Naive thymus-derived CD4-positive, alpha-beta T cell (primary cell): ENCODE measurements at regions of chr4 and their contacts with region 1.

Region 1: DNA sequence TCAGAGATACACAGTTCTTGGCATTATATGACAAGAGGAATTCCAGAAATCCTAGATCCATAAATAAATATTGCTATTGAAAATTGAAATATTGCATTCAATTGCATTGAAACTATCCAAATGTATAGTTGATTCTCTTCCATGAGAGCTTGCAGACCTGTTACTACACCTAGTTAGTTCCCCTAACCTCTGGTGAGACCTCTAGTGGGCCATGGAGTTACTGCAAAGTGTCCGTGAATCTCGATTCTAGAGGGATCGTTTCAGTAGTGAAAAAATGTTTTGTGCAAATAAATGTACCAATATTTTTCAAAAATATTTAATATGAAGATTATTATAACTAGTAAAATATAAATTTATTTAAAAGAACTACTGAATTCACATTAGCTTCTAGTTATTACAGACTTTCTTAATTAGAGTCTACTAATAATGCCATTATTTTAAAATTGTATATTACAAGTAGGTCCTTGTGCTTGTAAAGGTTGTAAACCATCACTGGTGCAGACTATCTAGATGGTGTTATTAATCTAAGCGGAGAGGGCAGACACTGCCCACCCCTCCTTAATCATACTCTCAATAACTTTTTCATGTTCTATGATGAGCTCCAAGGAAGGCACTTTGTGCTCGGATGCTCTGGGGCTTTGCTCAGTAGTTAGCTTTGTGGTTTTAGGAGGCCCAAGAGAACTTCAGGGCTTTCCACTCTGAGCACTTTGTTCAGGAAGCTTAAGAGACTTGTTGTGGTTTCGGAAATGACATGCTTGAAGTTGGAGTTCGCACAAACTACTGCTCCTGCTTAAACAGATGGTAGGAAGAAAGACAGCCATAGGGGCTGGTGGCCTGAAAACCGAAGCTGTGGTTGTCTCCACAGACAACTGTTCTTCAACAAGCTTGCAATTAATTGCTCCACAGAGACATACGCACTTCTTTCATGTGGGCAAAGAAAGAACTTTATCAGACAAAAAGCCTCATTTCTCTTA is 42.8 kb downstream of the IL21 start:
- DNase-seq: peak; percentile 12 to 95 (median 91)
- ATAC-seq: peak; percentile 90
- H3K4me3 ChIP-seq: peak overlapping the region; percentile 12
- H3K4me3 Mint-ChIP-seq: peak overlapping the region; percentile 47 to 79 (median 72)
- H3K27ac ChIP-seq: peak overlapping the region; percentile 76
- H3K27ac Mint-ChIP-seq: peak overlapping the region; percentile 82 to 98 (median 91)
- H3K4me1 ChIP-seq: peaks cover 7 to 14% of the 10 kb centered on the region in 2 donors
- H3K4me1 Mint-ChIP-seq: peaks cover 16 to 54% (median 50%) of the 10 kb centered on the region in 7 donors
- H3K27me3 ChIP-seq: no peaks in the 10 kb centered on the region
- H3K27me3 Mint-ChIP-seq: peaks cover 0 to 6% (median 0%) of the 10 kb centered on the region in 5 donors

Region 2: GRCh38 chr4:121227341-121227792 is 1350.7 kb before region 1 on chr4:
- CTCF ChIA-PET with region 1: no interaction called
- POLR2A ChIA-PET with region 1: no interaction called
- intact Hi-C with region 1: no loop called
- DNase-seq: peak in 3 of 9 donors; percentile 26 to 40 (median 28)
- ATAC-seq: peak; percentile 76
- H3K4me3 ChIP-seq: peak overlapping the region; percentile 34
- H3K4me3 Mint-ChIP-seq: peak overlapping the region in 9 of 10 donors; percentile 52 to 83 (median 69)
- H3K27ac ChIP-seq: peak overlapping the region; percentile 62
- H3K27ac Mint-ChIP-seq: peak overlapping the region; percentile 9 to 91 (median 77)
- H3K4me1 ChIP-seq: peaks cover 7 to 11% of the 10 kb centered on the region in 2 donors
- H3K4me1 Mint-ChIP-seq: peaks cover 12 to 50% (median 30%) of the 10 kb centered on the region in 7 donors
- H3K27me3 ChIP-seq: no peaks in the 10 kb centered on the region
- H3K27me3 Mint-ChIP-seq: no peaks in the 10 kb centered on the region

Region 3: GRCh38 chr4:121462660-121463261 is 1115.3 kb before region 1 on chr4:
- CTCF ChIA-PET with region 1: no interaction called
- POLR2A ChIA-PET with region 1: no interaction called
- intact Hi-C with region 1: loop called (anchors 5 to 10 kb)
- DNase-seq: peak in 7 of 9 donors; percentile 15 to 49 (median 37)
- ATAC-seq: peak; percentile 76
- H3K4me3 ChIP-seq: no peak overlapping the region
- H3K4me3 Mint-ChIP-seq: no peak overlapping the region
- H3K27ac ChIP-seq: no peak overlapping the region
- H3K27ac Mint-ChIP-seq: no peak overlapping the region
- H3K4me1 ChIP-seq: no peaks in the 10 kb centered on the region
- H3K4me1 Mint-ChIP-seq: peaks cover 0 to 3% (median 0%) of the 10 kb centered on the region in 7 donors
- H3K27me3 ChIP-seq: no peaks in the 10 kb centered on the region
- H3K27me3 Mint-ChIP-seq: peaks cover 32 to 39% (median 33%) of the 10 kb centered on the region in 5 donors

Region 4: DNA sequence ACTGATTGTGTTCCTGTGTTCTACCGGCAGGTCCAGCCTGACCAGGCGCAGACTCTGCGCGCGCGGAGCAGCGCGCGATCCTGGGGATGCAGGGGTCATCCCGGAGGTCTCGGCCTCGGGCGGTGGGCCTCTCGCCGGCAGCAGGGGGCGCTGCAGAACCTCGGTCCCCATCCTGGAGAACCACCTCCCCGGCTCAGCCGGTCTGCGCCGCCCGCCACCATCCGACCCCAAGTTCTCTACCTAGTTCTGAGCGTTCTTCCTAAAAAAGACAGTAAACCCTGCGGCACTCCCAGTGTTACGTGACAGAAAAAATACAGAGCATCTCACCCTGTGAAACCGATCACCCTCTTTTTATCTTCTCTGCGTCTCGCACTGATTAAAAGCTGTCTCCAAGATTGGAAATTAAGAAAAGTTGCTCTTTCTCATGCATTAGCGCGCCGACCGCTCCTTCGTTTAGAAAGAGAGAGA is 627.8 kb before region 1 on chr4:
- CTCF ChIA-PET with region 1: interaction called, 13 read pairs
- POLR2A ChIA-PET with region 1: no interaction called
- intact Hi-C with region 1: loop called (anchors 1 kb)
- DNase-seq: peak; percentile 53 to 88 (median 68)
- ATAC-seq: peak; percentile 87
- H3K4me3 ChIP-seq: peak overlapping the region; percentile 50
- H3K4me3 Mint-ChIP-seq: peak overlapping the region; percentile 84 to 95 (median 88)
- H3K27ac ChIP-seq: no peak overlapping the region
- H3K27ac Mint-ChIP-seq: peak overlapping the region in 4 of 9 donors; percentile 10 to 45 (median 20)
- H3K4me1 ChIP-seq: no peaks in the 10 kb centered on the region
- H3K4me1 Mint-ChIP-seq: peaks cover 0 to 26% (median 17%) of the 10 kb centered on the region in 7 donors
- H3K27me3 ChIP-seq: peaks cover 0 to 11% of the 10 kb centered on the region in 2 donors
- H3K27me3 Mint-ChIP-seq: peaks cover 32 to 65% (median 47%) of the 10 kb centered on the region in 5 donors

Region 5: GRCh38 chr4:122205690-122206089 is 372.4 kb before region 1 on chr4:
- CTCF ChIA-PET with region 1: no interaction called
- POLR2A ChIA-PET with region 1: no interaction called
- intact Hi-C with region 1: loop called (anchors 2 to 10 kb)
- DNase-seq: no peak
- ATAC-seq: no peak
- H3K4me3 ChIP-seq: no peak overlapping the region
- H3K4me3 Mint-ChIP-seq: no peak overlapping the region
- H3K27ac ChIP-seq: no peak overlapping the region
- H3K27ac Mint-ChIP-seq: peak overlapping the region in 1 of 9 donors; percentile 41
- H3K4me1 ChIP-seq: no peaks in the 10 kb centered on the region
- H3K4me1 Mint-ChIP-seq: peaks cover 0 to 5% (median under 1%) of the 10 kb centered on the region in 7 donors
- H3K27me3 ChIP-seq: no peaks in the 10 kb centered on the region
- H3K27me3 Mint-ChIP-seq: no peaks in the 10 kb centered on the region

Region 6: DNA sequence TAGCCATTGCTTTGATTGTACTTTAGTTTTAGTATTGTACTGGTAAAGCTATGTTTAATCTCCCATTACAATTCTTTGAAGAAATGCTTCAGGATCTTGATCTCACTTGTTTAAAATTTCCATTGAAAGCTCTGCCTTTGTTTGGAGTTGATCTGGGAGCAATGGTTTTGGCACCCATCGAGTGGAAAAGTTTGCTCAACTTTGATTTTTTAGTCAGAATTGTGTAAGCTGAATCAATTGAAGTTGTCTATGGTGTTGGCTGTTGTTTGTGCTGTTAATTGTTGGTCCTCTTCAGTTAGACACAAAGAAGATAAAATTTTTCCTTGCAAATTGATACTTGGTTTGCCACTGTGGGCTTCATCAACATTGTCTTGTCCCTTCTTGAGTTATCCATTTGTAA is 299.1 kb before region 1 on chr4:
- CTCF ChIA-PET with region 1: no interaction called
- POLR2A ChIA-PET with region 1: no interaction called
- intact Hi-C with region 1: no loop called
- DNase-seq: no peak
- ATAC-seq: no peak
- H3K4me3 ChIP-seq: no peak overlapping the region
- H3K4me3 Mint-ChIP-seq: no peak overlapping the region
- H3K27ac ChIP-seq: no peak overlapping the region
- H3K27ac Mint-ChIP-seq: no peak overlapping the region
- H3K4me1 ChIP-seq: no peaks in the 10 kb centered on the region
- H3K4me1 Mint-ChIP-seq: no peaks in the 10 kb centered on the region
- H3K27me3 ChIP-seq: no peaks in the 10 kb centered on the region
- H3K27me3 Mint-ChIP-seq: no peaks in the 10 kb centered on the region

Region 7: DNA sequence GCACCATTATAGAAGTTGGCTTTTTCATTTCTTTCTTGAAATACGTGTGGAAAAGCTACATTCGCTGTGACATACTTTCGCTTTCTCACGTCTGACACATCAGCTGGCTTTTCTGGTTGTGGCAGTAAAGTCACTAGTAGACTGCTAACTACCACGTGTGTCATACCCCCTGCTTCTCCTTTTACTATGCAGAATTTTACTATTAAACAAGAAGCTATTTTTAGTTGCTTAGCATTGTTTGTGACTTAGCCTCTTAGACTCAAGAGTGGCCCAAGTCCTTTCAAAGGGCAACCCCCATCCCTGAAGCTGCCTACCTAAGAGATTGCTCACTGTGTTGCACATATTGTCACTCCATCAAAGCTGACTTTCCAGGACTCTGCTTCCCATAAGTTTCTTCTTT is 119.5 kb before region 1 on chr4:
- CTCF ChIA-PET with region 1: no interaction called
- POLR2A ChIA-PET with region 1: interaction called, 4 read pairs
- intact Hi-C with region 1: loop called (anchors 2 kb)
- DNase-seq: peak in 6 of 9 donors; percentile 19 to 41 (median 34)
- ATAC-seq: peak; percentile 76
- H3K4me3 ChIP-seq: peak overlapping the region; percentile 33
- H3K4me3 Mint-ChIP-seq: peak overlapping the region; percentile 74 to 91 (median 86)
- H3K27ac ChIP-seq: no peak overlapping the region
- H3K27ac Mint-ChIP-seq: peak overlapping the region; percentile 66 to 86 (median 77)
- H3K4me1 ChIP-seq: peaks cover 25 to 46% of the 10 kb centered on the region in 2 donors
- H3K4me1 Mint-ChIP-seq: peaks cover 20 to 55% (median 50%) of the 10 kb centered on the region in 7 donors
- H3K27me3 ChIP-seq: no peaks in the 10 kb centered on the region
- H3K27me3 Mint-ChIP-seq: no peaks in the 10 kb centered on the region

Region 8: GRCh38 chr4:122716825-122717448 is 138.8 kb after region 1 on chr4:
- CTCF ChIA-PET with region 1: interaction called, 6 read pairs
- POLR2A ChIA-PET with region 1: no interaction called
- intact Hi-C with region 1: loop called in 1 of 2 experiments (anchors 1 kb)
- DNase-seq: peak; percentile 20 to 70 (median 63)
- ATAC-seq: peak; percentile 96
- H3K4me3 ChIP-seq: no peak overlapping the region
- H3K4me3 Mint-ChIP-seq: no peak overlapping the region
- H3K27ac ChIP-seq: no peak overlapping the region
- H3K27ac Mint-ChIP-seq: peak overlapping the region in 1 of 9 donors; percentile 46
- H3K4me1 ChIP-seq: peaks cover 0 to 5% of the 10 kb centered on the region in 2 donors
- H3K4me1 Mint-ChIP-seq: peaks cover 0 to 37% (median 12%) of the 10 kb centered on the region in 7 donors
- H3K27me3 ChIP-seq: no peaks in the 10 kb centered on the region
- H3K27me3 Mint-ChIP-seq: peaks cover 0 to 2% (median 0%) of the 10 kb centered on the region in 5 donors

Region 9: GRCh38 chr4:123055943-123056342 is 477.8 kb after region 1 on chr4:
- CTCF ChIA-PET with region 1: no interaction called
- POLR2A ChIA-PET with region 1: no interaction called
- intact Hi-C with region 1: no loop called
- DNase-seq: no peak
- ATAC-seq: no peak
- H3K4me3 ChIP-seq: no peak overlapping the region
- H3K4me3 Mint-ChIP-seq: no peak overlapping the region
- H3K27ac ChIP-seq: no peak overlapping the region
- H3K27ac Mint-ChIP-seq: no peak overlapping the region
- H3K4me1 ChIP-seq: no peaks in the 10 kb centered on the region
- H3K4me1 Mint-ChIP-seq: peaks cover 0 to 5% (median 0%) of the 10 kb centered on the region in 7 donors
- H3K27me3 ChIP-seq: no peaks in the 10 kb centered on the region
- H3K27me3 Mint-ChIP-seq: no peaks in the 10 kb centered on the region

Region 10: GRCh38 chr4:124262211-124263179 is 1684.4 kb after region 1 on chr4:
- CTCF ChIA-PET with region 1: no interaction called
- POLR2A ChIA-PET with region 1: no interaction called
- intact Hi-C with region 1: loop called in 1 of 2 experiments (anchors 5 kb)
- DNase-seq: peak in 6 of 9 donors; percentile 7 to 28 (median 20)
- ATAC-seq: peak; percentile 47
- H3K4me3 ChIP-seq: no peak overlapping the region
- H3K4me3 Mint-ChIP-seq: no peak overlapping the region
- H3K27ac ChIP-seq: no peak overlapping the region
- H3K27ac Mint-ChIP-seq: no peak overlapping the region
- H3K4me1 ChIP-seq: no peaks in the 10 kb centered on the region
- H3K4me1 Mint-ChIP-seq: no peaks in the 10 kb centered on the region
- H3K27me3 ChIP-seq: no peaks in the 10 kb centered on the region
- H3K27me3 Mint-ChIP-seq: peaks cover 0 to 14% (median 4%) of the 10 kb centered on the region in 5 donors